CD8-positive, alpha-beta memory T cell (primary cell): ENCODE measurements at regions of chr1 and their contacts with region 1.

Region 1: DNA sequence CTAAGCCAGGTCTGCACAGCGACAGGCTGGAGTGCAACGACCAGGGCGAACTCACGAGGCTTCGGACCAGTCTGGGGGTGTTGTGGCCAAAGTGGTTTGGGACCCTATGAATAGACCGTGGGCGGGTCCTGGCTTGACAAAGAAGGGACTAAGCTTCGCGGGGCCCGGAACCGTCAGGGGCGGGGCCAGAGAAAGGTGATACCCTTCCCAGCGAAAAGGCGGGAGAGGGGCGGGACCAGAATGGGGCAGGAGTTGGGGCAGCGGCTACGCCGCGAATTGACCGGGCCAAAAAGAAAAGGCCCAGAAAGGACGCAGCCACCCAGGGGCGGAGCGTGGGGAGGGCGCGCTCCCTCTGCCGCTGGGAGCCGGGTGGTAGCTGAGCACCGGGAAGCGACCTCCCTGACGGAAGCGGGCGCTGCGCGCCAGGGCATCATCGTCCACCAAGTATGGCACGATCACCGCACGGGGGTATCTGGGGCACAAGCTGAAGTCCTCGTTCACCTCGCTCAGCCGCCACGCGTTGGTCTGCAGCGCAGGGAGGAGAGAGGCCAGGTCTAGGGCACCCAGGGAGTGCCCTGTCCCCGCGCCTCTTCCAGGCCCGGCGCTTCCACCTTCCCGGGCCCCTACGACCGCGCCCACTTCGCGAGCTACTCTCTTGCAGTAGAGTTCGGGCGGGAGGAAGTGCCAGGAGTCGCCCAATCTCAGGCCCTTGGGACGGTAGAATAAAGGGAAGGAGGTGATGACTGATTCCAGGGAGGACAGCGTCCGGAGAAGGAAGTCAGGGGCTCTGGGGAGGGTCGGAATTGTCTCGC is 6.7 kb upstream of the FAM167B start:
- DNase-seq: peak; percentile 58 to 76 (median 62)
- H3K4me3 ChIP-seq: peak overlapping the region; percentile 96
- H3K4me3 Mint-ChIP-seq: peak overlapping the region; percentile 89 to 94 (median 92)
- H3K27ac ChIP-seq: peak overlapping the region; percentile 24
- H3K27ac Mint-ChIP-seq: peak overlapping the region in 7 of 8 donors; percentile 56 to 88 (median 80)
- H3K4me1 ChIP-seq: peaks cover 16% of the 10 kb centered on the region
- H3K4me1 Mint-ChIP-seq: peaks cover 5 to 32% (median 6%) of the 10 kb centered on the region in 3 donors
- H3K27me3 ChIP-seq: no peaks in the 10 kb centered on the region
- H3K27me3 Mint-ChIP-seq: no peaks in the 10 kb centered on the region

Region 2: GRCh38 chr1:32255072-32256071 is 15.0 kb after region 1 on chr1:
- CTCF ChIA-PET with region 1: interaction called, 77 read pairs
- POLR2A ChIA-PET with region 1: interaction called, 31 read pairs
- DNase-seq: peak in 1 of 5 donors; percentile 56
- H3K4me3 ChIP-seq: peak overlapping the region; percentile 60
- H3K4me3 Mint-ChIP-seq: peak overlapping the region; percentile 88 to 100 (median 96)
- H3K27ac ChIP-seq: no peak overlapping the region
- H3K27ac Mint-ChIP-seq: peak overlapping the region; percentile 76 to 100 (median 92)
- H3K4me1 ChIP-seq: peaks cover 47% of the 10 kb centered on the region
- H3K4me1 Mint-ChIP-seq: peaks cover 51 to 65% (median 56%) of the 10 kb centered on the region in 3 donors
- H3K27me3 ChIP-seq: no peaks in the 10 kb centered on the region
- H3K27me3 Mint-ChIP-seq: peaks cover 0 to 2% of the 10 kb centered on the region in 2 donors

Region 3: DNA sequence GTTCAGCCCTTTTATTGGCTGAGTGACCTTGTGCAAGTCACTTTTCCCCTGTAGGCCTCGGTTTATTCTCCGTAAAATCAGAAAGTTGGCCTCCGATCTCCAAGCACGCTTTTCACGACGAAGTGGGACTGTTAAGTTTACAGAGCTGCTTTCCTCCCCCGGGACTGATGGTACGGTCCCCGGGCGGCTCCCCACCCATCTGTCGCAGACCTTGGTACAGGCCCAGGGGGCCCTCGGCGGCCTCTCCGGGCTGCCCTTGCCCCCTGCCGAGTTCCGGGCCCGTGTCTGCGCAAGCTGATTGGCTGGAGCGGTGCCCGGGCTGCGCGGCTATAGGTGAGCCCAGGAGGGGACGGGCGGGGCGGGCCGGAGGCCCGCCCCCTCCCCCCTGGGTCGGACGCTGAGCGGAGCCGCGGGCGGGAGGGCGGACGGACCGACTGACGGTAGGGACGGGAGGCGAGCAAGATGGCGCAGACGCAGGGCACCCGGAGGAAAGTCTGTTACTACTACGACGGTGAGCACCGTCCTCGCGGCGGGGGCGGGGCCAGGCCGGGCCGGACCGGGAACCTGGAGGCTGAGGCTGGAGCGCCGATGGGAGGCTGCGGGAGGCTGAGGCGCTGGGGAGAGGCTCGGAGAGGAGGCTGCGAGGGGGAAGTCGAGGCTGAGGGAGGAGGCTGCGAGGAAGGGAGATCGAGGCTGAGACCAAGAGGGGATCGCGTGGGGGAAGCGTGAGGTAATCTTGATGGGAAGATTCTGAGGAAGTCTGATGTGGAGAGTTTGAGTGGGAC is 51.6 kb after region 1 on chr1 and contains the start of gene HDAC1:
- CTCF ChIA-PET with region 1: interaction called, 22 read pairs
- POLR2A ChIA-PET with region 1: interaction called, 8 read pairs
- DNase-seq: peak; percentile 95 to 98 (median 97)
- H3K4me3 ChIP-seq: peak within 1 kb of the TSS; percentile 76
- H3K4me3 Mint-ChIP-seq: peak within 1 kb of the TSS; percentile 96 to 100 (median 99)
- H3K27ac ChIP-seq: peak within 1 kb of the TSS; percentile 93
- H3K27ac Mint-ChIP-seq: peak within 1 kb of the TSS; percentile 95 to 99 (median 98)
- H3K4me1 ChIP-seq: peaks cover 59% of the 10 kb centered on the region
- H3K4me1 Mint-ChIP-seq: peaks cover 41 to 59% (median 55%) of the 10 kb centered on the region in 3 donors
- H3K27me3 ChIP-seq: no peaks in the 10 kb centered on the region
- H3K27me3 Mint-ChIP-seq: no peaks in the 10 kb centered on the region
- total RNA-seq, gene HDAC1: 164 to 172 TPM

Region 4: DNA sequence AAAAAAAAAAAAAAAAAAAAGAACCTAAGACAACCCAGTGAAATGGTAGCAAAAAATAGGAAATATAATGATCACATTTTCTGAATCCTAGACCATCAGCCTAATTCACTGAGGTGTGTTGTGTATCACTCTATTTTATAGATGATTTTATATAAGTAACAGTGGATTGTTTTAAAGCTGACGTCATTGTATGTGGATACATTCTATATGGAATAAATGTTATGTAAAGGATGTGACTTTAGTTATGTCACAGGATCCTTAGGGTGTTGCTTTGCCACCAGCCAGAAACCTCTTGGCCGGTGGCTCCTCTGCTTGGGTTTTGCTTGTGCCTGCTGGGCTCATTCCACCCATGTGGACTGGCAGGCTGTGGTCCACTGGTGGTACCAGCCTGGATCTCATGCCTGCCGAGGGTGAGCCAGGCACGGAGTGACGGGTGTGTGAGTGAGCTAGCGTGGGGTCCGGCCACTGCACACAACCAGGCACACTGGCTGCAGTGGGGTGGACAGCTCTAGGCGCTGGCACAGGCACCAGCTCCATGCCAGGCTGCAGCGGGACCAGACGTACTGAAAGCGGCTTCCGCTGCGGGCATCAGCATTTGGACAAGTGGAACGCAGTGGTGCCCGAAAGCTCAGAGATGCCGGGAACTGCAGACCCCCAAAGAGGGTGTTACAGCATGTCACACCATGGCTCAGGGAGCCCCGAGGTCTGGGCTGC is 365.5 kb after region 1 on chr1:
- CTCF ChIA-PET with region 1: no interaction called
- POLR2A ChIA-PET with region 1: interaction called, 16 read pairs
- DNase-seq: no peak
- H3K4me3 ChIP-seq: no peak overlapping the region
- H3K4me3 Mint-ChIP-seq: no peak overlapping the region
- H3K27ac ChIP-seq: no peak overlapping the region
- H3K27ac Mint-ChIP-seq: no peak overlapping the region
- H3K4me1 ChIP-seq: no peaks in the 10 kb centered on the region
- H3K4me1 Mint-ChIP-seq: no peaks in the 10 kb centered on the region
- H3K27me3 ChIP-seq: no peaks in the 10 kb centered on the region
- H3K27me3 Mint-ChIP-seq: peaks cover 4 to 5% of the 10 kb centered on the region in 2 donors